SK-N-SH (cell line): ENCODE measurements at regions of chr1 and their contacts with region 1.

Region 1: DNA sequence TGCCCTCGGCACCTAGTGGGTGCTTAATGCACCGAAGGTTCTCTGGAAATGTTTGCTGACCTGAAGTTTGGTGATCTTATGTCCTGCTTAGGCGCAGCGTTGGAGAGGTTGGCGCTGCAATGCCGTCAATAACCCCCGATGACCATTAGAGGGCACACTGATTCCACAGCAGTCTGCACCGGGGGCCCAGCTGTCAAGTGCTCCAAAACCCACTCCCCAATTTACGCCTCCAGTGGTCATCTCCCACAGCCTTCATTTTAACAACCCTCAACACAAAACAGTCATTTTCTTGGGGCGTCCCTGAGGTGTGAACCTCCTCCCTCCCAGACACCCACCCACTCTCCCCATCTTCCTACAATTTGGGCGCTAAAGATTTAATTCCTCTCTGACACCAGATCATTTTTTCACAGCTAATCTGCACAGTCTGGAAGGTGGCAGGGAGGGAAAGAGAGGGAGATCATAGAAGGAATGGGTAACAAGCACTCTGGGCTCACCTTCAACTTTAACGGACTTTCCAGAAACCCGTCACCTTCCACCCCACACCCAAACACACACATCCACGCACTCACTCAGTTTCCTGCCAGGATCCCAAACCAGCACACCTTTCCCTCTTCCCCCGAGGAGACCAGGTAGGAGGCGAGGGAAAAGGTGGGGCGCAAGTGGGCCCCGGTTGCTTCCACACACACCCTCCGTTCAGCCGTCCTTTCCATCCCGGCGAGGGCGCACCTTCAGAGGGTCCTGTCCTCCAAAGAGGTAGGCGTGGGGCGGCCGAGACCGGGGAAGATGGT is 576 bp upstream of the NPR1 start:
- DNase-seq: peak; percentile 86
- H3K4me3 ChIP-seq: peak overlapping the region; percentile 34 to 44
- H3K27ac ChIP-seq: no peak overlapping the region
- H3K4me1 ChIP-seq: peaks cover 0 to 15% of the 10 kb centered on the region in 2 experiments; a peak in 1 of 4 replicates
- H3K27me3 ChIP-seq: peaks cover 30% of the 10 kb centered on the region
- CTCF ChIP-seq: peak; percentile 96
- EP300 ChIP-seq: no peak
- RAD21 ChIP-seq: peak; percentile 90

Region 2: DNA sequence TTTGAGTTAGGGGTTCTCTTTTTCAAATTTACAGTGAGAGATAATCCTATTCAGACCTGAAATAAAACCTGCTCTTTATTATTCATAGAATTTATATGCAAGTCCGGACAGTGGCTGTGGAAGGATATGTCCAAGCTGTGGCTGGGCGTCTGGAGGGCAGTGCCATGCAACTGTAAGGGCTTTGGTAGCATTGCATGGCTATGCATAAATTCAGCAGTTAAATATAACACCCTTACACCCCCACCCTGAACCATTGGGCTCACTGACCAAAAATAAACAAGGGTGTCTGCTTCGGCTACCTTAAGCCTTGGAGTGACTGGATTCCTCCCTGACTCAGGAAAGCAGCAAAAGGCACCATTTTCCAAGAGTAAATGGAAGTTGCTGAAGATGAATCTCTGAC is 38.6 kb before region 1 on chr1:
- CTCF ChIA-PET with region 1: interaction called, 12 read pairs
- POLR2A ChIA-PET with region 1: no interaction called
- DNase-seq: no peak
- H3K4me3 ChIP-seq: no peak overlapping the region
- H3K27ac ChIP-seq: no peak overlapping the region
- H3K4me1 ChIP-seq: no peaks in the 10 kb centered on the region; a peak in 1 of 4 replicates
- H3K27me3 ChIP-seq: no peaks in the 10 kb centered on the region
- CTCF ChIP-seq: no peak
- EP300 ChIP-seq: no peak
- RAD21 ChIP-seq: no peak

Region 3: DNA sequence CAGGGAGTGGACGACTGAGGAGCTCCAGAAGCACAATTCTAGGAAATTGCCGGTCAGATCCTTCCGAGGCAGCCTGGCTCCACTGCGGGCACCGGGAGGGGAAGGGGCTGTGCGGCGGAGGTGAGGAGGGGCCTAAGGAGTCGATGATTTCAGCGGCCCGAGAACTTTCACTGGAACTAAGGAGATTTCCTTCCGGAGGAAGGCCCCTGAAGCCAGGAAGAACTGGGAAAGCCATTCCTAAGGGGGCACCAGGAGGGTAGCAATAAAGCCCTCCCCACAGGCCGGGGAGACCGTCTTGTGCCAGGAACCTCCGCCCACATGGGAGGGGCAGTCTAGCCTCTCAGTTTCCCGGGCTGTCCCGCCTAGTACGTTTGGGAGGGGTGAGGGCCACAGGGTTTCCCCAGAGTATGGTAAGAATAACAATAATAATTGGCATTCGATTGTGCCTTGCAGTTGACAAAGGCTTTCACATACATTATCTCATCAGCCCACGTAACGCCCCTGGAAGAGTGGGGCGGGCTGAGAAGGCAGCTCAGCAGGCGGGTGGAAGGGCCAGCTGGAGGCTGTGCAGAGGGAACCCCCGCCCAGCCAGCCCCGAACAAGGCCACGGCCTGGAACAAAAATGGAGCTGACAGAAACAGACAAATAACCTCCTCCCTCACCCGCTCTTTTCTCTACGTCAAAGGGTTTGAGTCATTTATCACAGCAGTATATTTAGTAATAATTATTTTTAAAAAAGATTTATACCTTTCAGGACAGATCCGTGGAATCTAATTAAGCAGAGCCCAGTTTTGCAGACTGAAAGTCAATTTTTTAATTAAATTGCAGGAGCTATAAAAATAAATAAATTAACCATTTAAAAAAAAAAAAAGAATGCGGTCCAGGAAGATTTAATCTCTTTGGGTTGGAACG is 20.4 kb after region 1 on chr1:
- CTCF ChIA-PET with region 1: interaction called, 13 read pairs
- POLR2A ChIA-PET with region 1: no interaction called
- DNase-seq: peak; percentile 49
- H3K4me3 ChIP-seq: no peak overlapping the region
- H3K27ac ChIP-seq: no peak overlapping the region
- H3K4me1 ChIP-seq: peaks cover 0 to 16% of the 10 kb centered on the region in 2 experiments; a peak in 1 of 4 replicates
- H3K27me3 ChIP-seq: no peaks in the 10 kb centered on the region
- CTCF ChIP-seq: no peak
- EP300 ChIP-seq: no peak
- RAD21 ChIP-seq: no peak

Region 4: DNA sequence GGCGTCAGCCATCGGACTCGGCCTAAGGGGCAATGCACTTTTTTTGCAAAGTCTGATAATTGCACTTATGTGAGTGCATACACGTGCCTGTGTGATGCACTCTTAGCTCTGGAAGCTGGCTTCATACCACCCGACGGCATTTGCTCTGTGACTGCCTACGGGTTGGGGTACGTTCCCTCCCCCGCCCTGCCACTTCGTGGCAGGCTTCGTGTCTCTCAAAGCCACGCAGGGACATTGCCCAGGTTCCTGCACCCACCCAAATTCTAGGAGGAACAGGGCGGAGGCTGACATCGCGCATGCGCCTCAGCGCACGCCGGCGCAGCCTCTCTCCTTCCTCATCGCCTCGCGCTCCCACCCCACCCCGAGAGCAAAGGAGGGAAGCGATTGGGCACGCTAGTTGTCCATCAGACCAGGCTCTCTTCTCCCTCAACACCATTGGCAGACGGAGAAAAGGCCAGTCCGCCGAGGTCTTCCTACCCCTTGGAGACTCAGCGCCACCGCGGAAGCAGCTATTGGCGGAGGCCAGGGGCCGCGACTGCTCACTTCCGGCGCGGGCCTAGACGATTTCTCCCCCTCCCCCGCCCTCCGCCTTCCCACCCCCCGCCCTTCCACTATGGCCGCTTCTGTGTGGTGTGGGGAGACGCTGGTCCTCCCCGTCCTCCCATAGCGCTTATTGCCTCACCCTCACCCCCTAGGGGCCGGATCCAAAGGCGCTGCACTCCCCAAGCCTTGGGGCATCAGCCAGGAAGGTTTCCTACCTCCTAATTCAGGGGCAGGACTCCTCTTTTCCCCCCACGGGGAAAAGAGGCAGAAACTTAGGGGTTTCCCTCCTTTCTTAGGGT is 49.8 kb after region 1 on chr1 and contains the start of gene INTS3:
- CTCF ChIA-PET with region 1: interaction called, 56 read pairs
- POLR2A ChIA-PET with region 1: no interaction called
- DNase-seq: peak; percentile 97
- H3K4me3 ChIP-seq: peak within 1 kb of the TSS; percentile 72 to 97
- H3K27ac ChIP-seq: peak within 1 kb of the TSS; percentile 83 to 91
- H3K4me1 ChIP-seq: peaks cover 9 to 12% of the 10 kb centered on the region in 2 experiments; a peak in 2 of 4 replicates
- H3K27me3 ChIP-seq: no peaks in the 10 kb centered on the region
- CTCF ChIP-seq: peak; percentile 19; the same call in 1 of the 2 replicates
- EP300 ChIP-seq: peak in 1 of 2 experiments; percentile 44; a peak in 2 of 4 replicates
- RAD21 ChIP-seq: no peak
- polyA plus RNA-seq, gene INTS3: 64.3 and 80.9 TPM in 2 replicates

Region 5: GRCh38 chr1:153749408-153750005 is 71.6 kb after region 1 on chr1:
- CTCF ChIA-PET with region 1: interaction called, 156 read pairs
- POLR2A ChIA-PET with region 1: no interaction called
- DNase-seq: peak; percentile 86
- H3K4me3 ChIP-seq: no peak overlapping the region
- H3K27ac ChIP-seq: no peak overlapping the region
- H3K4me1 ChIP-seq: no peaks in the 10 kb centered on the region; a peak in 1 of 4 replicates
- H3K27me3 ChIP-seq: no peaks in the 10 kb centered on the region
- CTCF ChIP-seq: peak; percentile 96
- EP300 ChIP-seq: no peak
- RAD21 ChIP-seq: peak; percentile 89

Region 6: DNA sequence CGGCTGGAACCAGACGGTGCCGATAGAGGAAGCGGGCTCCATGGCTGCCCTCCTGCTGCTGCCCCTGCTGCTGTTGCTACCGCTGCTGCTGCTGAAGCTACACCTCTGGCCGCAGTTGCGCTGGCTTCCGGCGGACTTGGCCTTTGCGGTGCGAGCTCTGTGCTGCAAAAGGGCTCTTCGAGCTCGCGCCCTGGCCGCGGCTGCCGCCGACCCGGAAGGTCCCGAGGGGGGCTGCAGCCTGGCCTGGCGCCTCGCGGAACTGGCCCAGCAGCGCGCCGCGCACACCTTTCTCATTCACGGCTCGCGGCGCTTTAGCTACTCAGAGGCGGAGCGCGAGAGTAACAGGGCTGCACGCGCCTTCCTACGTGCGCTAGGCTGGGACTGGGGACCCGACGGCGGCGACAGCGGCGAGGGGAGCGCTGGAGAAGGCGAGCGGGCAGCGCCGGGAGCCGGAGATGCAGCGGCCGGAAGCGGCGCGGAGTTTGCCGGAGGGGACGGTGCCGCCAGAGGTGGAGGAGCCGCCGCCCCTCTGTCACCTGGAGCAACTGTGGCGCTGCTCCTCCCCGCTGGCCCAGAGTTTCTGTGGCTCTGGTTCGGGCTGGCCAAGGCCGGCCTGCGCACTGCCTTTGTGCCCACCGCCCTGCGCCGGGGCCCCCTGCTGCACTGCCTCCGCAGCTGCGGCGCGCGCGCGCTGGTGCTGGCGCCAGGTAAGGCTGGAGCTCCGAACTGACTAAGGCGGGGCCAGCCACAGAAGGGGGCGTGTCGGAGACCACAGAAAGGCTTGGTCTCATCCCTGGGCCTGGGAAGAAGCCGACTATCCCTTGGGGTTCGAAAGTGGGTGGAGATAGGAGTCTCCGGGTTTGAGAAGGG is 97.8 kb after region 1 on chr1:
- CTCF ChIA-PET with region 1: interaction called, 60 read pairs
- POLR2A ChIA-PET with region 1: no interaction called
- DNase-seq: peak; percentile 81
- H3K4me3 ChIP-seq: peak overlapping the region; percentile 65 to 67
- H3K27ac ChIP-seq: peak overlapping the region in 1 of 2 experiments; percentile 69; a peak in 2 of 4 replicates
- H3K4me1 ChIP-seq: peaks cover 0 to 13% of the 10 kb centered on the region in 2 experiments; a peak in 1 of 4 replicates
- H3K27me3 ChIP-seq: no peaks in the 10 kb centered on the region
- CTCF ChIP-seq: 0 out of 2 replicates have a peak, but pooled peaks have one; percentile 7
- EP300 ChIP-seq: no peak
- RAD21 ChIP-seq: no peak